ENCODE measurements at regions of chr12 and their contacts with region 1.

Region 1: DNA sequence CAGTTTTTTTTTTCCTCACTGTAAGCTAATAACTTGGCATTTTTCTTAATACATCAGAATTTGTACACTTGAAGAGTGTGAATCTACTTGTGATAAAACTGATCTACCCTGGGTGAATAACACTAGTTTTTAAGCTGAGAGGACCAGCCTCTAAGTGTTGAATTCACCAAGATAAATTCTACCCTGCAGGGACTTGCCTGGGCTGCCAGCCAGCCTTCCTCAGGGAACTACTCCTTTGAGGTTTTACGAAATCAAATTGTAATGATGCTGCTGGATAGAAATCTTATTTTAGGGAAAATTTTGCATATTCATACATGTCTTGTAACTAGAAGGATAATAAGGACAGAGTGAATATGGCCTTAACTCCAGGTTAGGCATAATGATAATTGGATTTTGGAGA is 1.9 kb downstream of the MED21 start:
- DNase-seq: no peak
- ATAC-seq: no peak
- H3K4me3 Mint-ChIP-seq: no peak overlapping the region
- H3K27ac Mint-ChIP-seq: no peak overlapping the region
- H3K4me1 Mint-ChIP-seq: peaks cover 33% of the 10 kb centered on the region
- H3K27me3 Mint-ChIP-seq: peaks cover 2% of the 10 kb centered on the region

Region 2: DNA sequence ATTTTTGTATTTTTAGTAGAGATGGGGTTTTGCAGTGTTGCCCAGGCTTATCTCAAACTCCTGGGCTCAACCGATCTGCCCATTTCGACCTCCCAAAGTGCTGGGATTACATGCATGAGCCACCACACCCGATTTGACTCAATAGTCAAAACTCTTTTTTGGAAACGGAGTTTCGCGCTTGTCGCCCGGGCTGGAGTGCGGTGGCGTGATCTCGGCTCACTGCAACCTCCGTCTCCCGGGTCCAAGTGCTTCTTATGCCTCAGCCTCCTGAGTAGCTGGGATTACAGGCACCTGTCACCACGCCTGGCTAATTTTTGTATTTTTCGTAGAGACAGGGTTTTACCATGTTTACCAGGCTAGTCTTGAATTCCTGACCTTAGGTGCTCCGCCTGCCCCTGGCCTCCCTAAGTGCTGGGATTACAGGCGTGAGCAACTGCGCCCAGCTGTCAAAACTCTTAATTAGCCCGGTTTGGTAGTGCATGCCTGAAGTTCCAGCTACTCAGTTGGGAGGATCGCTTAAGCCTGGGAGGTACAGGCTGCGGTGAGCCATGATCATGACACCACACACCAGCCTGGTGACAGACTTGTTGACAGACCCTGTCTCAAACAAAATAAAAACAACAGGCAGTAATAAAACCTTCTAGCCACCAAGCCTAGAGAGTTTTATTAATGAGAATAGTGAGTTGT is 10.5 kb after region 1 on chr12:
- CTCF ChIA-PET with region 1: interaction called, 10 read pairs
- DNase-seq: no peak
- ATAC-seq: no peak
- H3K4me3 Mint-ChIP-seq: no peak overlapping the region
- H3K27ac Mint-ChIP-seq: no peak overlapping the region
- H3K4me1 Mint-ChIP-seq: peaks cover 4% of the 10 kb centered on the region
- H3K27me3 Mint-ChIP-seq: no peaks in the 10 kb centered on the region